ENCODE measurements at regions of chr7 and their contacts with region 1.

Region 1: DNA sequence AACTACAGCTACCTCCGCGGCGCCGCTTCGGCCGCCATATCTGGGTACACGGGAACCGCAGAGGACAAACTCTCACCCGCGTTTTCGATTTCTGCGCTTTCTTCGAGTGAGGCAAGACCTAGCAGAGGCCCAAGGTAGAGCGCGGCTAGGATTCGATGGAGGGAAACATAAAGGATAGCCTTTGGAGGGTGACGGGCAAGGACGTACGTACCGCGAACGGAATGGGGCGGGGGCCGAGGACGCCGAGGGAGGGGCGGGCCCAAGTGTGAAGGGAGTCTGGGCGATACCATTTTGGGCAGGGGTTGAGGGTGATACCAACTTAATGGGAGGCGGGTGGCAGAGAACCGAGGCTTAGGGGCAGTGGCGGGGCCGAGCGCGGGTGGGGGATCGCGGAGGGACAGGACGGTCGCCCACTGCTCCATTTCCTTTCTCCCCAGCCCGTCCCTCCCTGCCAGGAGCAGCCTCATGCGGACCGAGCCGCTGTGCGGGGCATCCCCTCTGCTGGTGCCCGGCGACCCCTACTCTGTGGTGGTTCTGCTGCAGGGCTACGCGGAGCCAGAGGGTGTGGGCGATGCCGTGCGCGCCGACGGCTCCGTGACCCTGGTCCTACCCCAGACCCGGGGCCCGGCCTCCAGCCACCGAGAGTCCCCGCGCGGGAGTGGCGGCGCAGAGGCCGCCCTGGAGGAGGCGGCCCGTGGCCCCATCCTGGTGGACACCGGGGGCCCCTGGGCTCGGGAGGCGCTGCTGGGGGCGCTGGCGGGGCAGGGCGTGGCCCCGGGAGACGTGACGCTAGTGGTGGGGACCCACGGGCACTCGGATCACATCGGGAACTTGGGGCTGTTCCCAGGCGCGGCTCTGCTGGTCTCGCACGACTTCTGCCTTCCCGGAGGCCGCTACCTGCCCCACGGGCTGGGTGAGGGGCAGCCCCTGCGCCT is at the start of gene MBLAC1:
- DNase-seq: peak; percentile 82 to 84
- ATAC-seq: peak; percentile 93 to 94
- H3K4me3 ChIP-seq: peak within 1 kb of the TSS; percentile 75 to 94 (median 84)
- H3K27ac ChIP-seq: peak within 1 kb of the TSS; percentile 90 to 96 (median 92)
- H3K4me1 ChIP-seq: peaks cover 11 to 22% of the 10 kb centered on the region in 2 donors
- H3K27me3 ChIP-seq: no peaks in the 10 kb centered on the region
- CTCF ChIP-seq: no peak
- POLR2A ChIP-seq: no peak
- total RNA-seq, gene MBLAC1: 1.4 to 7.4 (median 3.1) TPM

Region 2: DNA sequence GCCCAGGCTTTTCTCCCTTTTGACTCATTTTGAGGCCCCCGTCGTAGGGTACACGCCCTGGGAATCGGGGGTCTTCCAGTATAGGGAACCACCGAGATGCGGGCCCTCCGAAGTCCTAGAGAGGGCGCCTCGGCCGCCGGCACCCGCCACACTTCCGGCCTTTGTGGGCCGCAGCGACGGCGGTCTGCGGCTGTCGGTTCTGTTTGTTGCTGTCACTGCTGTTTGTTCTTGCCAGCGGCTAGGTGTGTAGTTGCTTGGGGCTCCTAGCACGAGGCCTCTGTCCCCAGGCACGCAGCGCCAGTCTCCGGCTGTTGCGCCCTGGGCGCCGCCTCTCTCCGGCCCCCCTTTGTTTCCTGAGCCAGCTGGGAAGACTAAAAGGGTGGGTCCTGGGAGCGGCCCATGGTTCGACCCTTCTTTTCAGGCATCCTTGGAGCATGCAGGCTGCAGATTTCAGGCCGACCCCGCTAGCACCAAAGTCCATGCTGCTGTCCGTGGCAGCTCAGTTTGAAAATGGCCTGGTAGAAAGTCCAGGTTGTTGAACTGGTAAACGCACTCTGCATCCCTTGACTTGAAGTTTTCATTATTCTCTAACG is 129.6 kb before region 1 on chr7:
- in situ Hi-C with region 1: loop called in 1 of 4 experiments (anchors 10 kb)
- intact Hi-C with region 1: loop called (anchors 5 kb)
- DNase-seq: peak in 1 of 2 donors; percentile 25
- ATAC-seq: peak in 1 of 2 donors; percentile 36
- H3K4me3 ChIP-seq: peak overlapping the region; percentile 58 to 68 (median 63)
- H3K27ac ChIP-seq: peak overlapping the region; percentile 44 to 73 (median 66)
- H3K4me1 ChIP-seq: peaks cover 4 to 8% of the 10 kb centered on the region in 2 donors
- H3K27me3 ChIP-seq: peaks cover 0 to 6% (median 0%) of the 10 kb centered on the region in 3 donors
- CTCF ChIP-seq: peak in 2 of 5 experiments; percentile 24 to 34
- POLR2A ChIP-seq: no peak

Region 3: GRCh38 chr7:100015232-100016209 is 111.7 kb before region 1 on chr7 and contains the start of gene ZKSCAN1:
- in situ Hi-C with region 1: no loop called
- intact Hi-C with region 1: loop called (anchors 10 kb)
- DNase-seq: peak; percentile 79 to 84
- ATAC-seq: peak; percentile 97
- H3K4me3 ChIP-seq: peak within 1 kb of the TSS; percentile 64 to 99 (median 94)
- H3K27ac ChIP-seq: peak within 1 kb of the TSS; percentile 92 to 99 (median 98)
- H3K4me1 ChIP-seq: peaks cover 15 to 22% of the 10 kb centered on the region in 2 donors
- H3K27me3 ChIP-seq: no peaks in the 10 kb centered on the region
- CTCF ChIP-seq: no peak
- POLR2A ChIP-seq: peak; percentile 85 to 87
- total RNA-seq, gene ZKSCAN1: 15.0 to 17.7 (median 15.5) TPM

Region 4: DNA sequence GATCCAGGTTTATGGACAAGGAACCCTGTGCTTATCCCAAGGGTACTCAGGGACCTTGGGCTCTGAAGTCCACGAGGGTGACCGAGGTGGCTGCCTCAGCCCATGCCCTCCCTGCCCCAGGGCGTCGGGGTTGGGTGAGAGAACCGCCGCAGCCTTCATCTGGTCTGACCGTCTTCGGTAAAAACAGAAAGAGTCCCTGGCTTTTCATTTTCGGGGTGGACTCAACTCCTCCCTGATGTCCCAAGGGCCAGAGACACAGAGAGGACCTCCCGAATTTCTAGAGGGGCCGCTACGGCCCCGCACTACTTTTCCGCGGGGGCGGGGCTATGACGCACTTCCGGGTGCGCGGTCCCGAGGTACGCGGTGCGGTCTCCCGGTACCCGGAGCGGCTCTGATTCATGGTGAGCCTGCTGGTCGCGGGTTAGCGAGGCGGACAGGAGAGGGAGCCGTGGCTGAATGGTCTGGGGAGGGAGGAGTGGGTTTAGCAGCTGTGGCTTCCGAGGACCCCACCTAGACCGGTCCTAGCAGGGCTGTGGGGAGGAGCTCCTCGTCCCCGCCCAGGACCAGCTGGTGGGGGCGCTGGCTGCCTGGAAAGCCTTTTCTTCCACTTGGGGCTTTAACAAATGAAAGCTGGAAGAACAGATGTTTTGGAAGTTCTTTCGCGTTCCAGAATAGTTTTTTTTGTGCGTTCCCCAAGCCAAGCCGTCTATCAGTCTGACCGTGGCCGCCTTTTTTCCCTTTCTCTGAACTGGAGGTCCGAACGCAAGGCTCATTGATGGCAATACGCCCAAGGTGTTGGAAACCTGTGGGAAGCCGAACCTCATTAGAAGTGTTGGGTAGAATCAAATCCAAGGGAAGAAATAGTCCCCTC is 77.5 kb before region 1 on chr7 and contains the start of gene ZSCAN21:
- in situ Hi-C with region 1: no loop called
- intact Hi-C with region 1: no loop called
- DNase-seq: peak; percentile 67 to 79
- ATAC-seq: peak; percentile 86 to 91
- H3K4me3 ChIP-seq: peak within 1 kb of the TSS; percentile 74 to 94 (median 82)
- H3K27ac ChIP-seq: peak within 1 kb of the TSS; percentile 92 to 98 (median 97)
- H3K4me1 ChIP-seq: peaks cover 8 to 15% of the 10 kb centered on the region in 2 donors
- H3K27me3 ChIP-seq: no peaks in the 10 kb centered on the region
- CTCF ChIP-seq: peak in 1 of 5 experiments; percentile 35
- POLR2A ChIP-seq: peak; percentile 76 to 85
- total RNA-seq, gene ZSCAN21: 14.4 to 26.4 (median 22.3) TPM

Region 5: GRCh38 chr7:100088621-100089457 is 38.4 kb before region 1 on chr7 and contains the start of gene COPS6:
- in situ Hi-C with region 1: no loop called
- intact Hi-C with region 1: loop called (anchors 5 kb)
- DNase-seq: peak; percentile 64 to 76
- ATAC-seq: peak; percentile 73 to 78
- H3K4me3 ChIP-seq: peak within 1 kb of the TSS; percentile 79 to 90 (median 88)
- H3K27ac ChIP-seq: peak within 1 kb of the TSS; percentile 88 to 97 (median 89)
- H3K4me1 ChIP-seq: peaks cover 13 to 14% of the 10 kb centered on the region in 2 donors
- H3K27me3 ChIP-seq: no peaks in the 10 kb centered on the region
- CTCF ChIP-seq: peak in 1 of 5 experiments; percentile 20
- POLR2A ChIP-seq: peak; percentile 83
- total RNA-seq, gene COPS6: 32.6 to 57.9 (median 39.4) TPM

Measured in gastrocnemius medialis (tissue), 4 donors.